CD4-positive, alpha-beta T cell (primary cell): ENCODE measurements at regions of chr3 and their contacts with region 1.

Region 1: GRCh38 chr3:171459942-171460724 is at the start of gene TNIK:
- DNase-seq: peak; percentile 85 to 98 (median 93)
- ATAC-seq: peak; percentile 82
- H3K4me3 ChIP-seq: peak within 1 kb of the TSS; percentile 74
- H3K4me3 Mint-ChIP-seq: peak within 1 kb of the TSS; percentile 97
- H3K27ac ChIP-seq: peak within 1 kb of the TSS; percentile 52 to 71
- H3K27ac Mint-ChIP-seq: peak within 1 kb of the TSS; percentile 92
- H3K4me1 ChIP-seq: peaks cover 40% of the 10 kb centered on the region
- H3K4me1 Mint-ChIP-seq: peaks cover 47% of the 10 kb centered on the region
- H3K27me3 ChIP-seq: no peaks in the 10 kb centered on the region
- H3K27me3 Mint-ChIP-seq: no peaks in the 10 kb centered on the region
- CTCF ChIP-seq: peak; percentile 29
- total RNA-seq, gene TNIK: 71.0 to 78.3 TPM

Region 2: DNA sequence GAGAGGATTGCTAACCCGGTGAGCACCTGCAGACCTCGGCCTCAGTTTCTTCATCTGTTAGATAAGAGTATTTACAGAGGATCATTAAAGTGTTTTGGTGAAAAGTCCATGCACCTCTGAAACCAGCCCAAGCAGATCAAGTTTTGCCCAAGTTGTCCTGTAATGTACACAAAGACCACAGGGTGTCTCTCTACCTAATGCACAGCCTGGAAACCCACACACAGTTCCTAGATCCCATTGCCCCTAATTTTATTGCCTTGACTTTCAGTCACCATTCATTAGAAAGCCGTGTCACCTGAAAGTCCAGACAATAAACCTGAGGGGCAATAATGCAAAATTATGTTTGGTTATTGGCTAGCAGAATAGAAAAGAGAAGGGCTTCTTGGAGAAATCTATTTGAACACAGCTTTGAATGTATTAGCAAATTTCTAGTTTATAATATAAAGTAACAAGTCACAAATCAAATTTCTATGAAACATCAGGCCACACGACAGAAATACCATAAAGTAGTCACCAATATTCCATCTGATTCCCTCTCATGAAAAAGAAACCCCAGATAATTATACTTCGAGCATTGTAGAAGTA is 272.3 kb before region 1 on chr3:
- CTCF ChIA-PET with region 1: no interaction called
- POLR2A ChIA-PET with region 1: no interaction called
- intact Hi-C with region 1: loop called (anchors 5 to 10 kb)
- DNase-seq: peak in 4 of 14 experiments; percentile 28 to 61 (median 52)
- ATAC-seq: peak; percentile 59
- H3K4me3 ChIP-seq: no peak overlapping the region
- H3K4me3 Mint-ChIP-seq: no peak overlapping the region
- H3K27ac ChIP-seq: no peak overlapping the region
- H3K27ac Mint-ChIP-seq: no peak overlapping the region
- H3K4me1 ChIP-seq: peaks cover 5% of the 10 kb centered on the region
- H3K4me1 Mint-ChIP-seq: peaks cover 33% of the 10 kb centered on the region
- H3K27me3 ChIP-seq: no peaks in the 10 kb centered on the region
- H3K27me3 Mint-ChIP-seq: no peaks in the 10 kb centered on the region
- CTCF ChIP-seq: peak; percentile 70

Region 3: GRCh38 chr3:171328419-171329082 is 131.6 kb before region 1 on chr3:
- CTCF ChIA-PET with region 1: interaction called, 3 read pairs
- POLR2A ChIA-PET with region 1: no interaction called
- intact Hi-C with region 1: loop called in 1 of 2 experiments (anchors 5 kb)
- DNase-seq: peak in 13 of 14 experiments; percentile 22 to 83 (median 40)
- ATAC-seq: peak; percentile 98
- H3K4me3 ChIP-seq: no peak overlapping the region
- H3K4me3 Mint-ChIP-seq: peak overlapping the region; percentile 3
- H3K27ac ChIP-seq: no peak overlapping the region
- H3K27ac Mint-ChIP-seq: peak overlapping the region; percentile 14
- H3K4me1 ChIP-seq: peaks cover 17% of the 10 kb centered on the region
- H3K4me1 Mint-ChIP-seq: peaks cover 71% of the 10 kb centered on the region
- H3K27me3 ChIP-seq: no peaks in the 10 kb centered on the region
- H3K27me3 Mint-ChIP-seq: no peaks in the 10 kb centered on the region
- CTCF ChIP-seq: peak; percentile 35

Region 4: GRCh38 chr3:171480526-171480925 is 20.4 kb after region 1 on chr3:
- CTCF ChIA-PET with region 1: interaction called, 12 read pairs
- POLR2A ChIA-PET with region 1: interaction called, 20 read pairs
- intact Hi-C with region 1: no loop called
- DNase-seq: peak in 4 of 14 experiments; percentile 28 to 73 (median 40)
- ATAC-seq: peak; percentile 88
- H3K4me3 ChIP-seq: no peak overlapping the region
- H3K4me3 Mint-ChIP-seq: peak overlapping the region; percentile 72
- H3K27ac ChIP-seq: peak overlapping the region in 1 of 2 donors; percentile 32
- H3K27ac Mint-ChIP-seq: peak overlapping the region; percentile 51
- H3K4me1 ChIP-seq: peaks cover 14% of the 10 kb centered on the region
- H3K4me1 Mint-ChIP-seq: peaks cover 11% of the 10 kb centered on the region
- H3K27me3 ChIP-seq: no peaks in the 10 kb centered on the region
- H3K27me3 Mint-ChIP-seq: no peaks in the 10 kb centered on the region
- CTCF ChIP-seq: no peak

Region 5: GRCh38 chr3:171514466-171514865 is 54.3 kb after region 1 on chr3:
- CTCF ChIA-PET with region 1: no interaction called
- POLR2A ChIA-PET with region 1: no interaction called
- intact Hi-C with region 1: loop called in 1 of 2 experiments (anchors 5 kb)
- DNase-seq: no peak
- ATAC-seq: no peak
- H3K4me3 ChIP-seq: no peak overlapping the region
- H3K4me3 Mint-ChIP-seq: no peak overlapping the region
- H3K27ac ChIP-seq: no peak overlapping the region
- H3K27ac Mint-ChIP-seq: no peak overlapping the region
- H3K4me1 ChIP-seq: no peaks in the 10 kb centered on the region
- H3K4me1 Mint-ChIP-seq: no peaks in the 10 kb centered on the region
- H3K27me3 ChIP-seq: no peaks in the 10 kb centered on the region
- H3K27me3 Mint-ChIP-seq: no peaks in the 10 kb centered on the region
- CTCF ChIP-seq: no peak

Region 6: GRCh38 chr3:171614318-171614921 is 154.3 kb after region 1 on chr3:
- CTCF ChIA-PET with region 1: no interaction called
- POLR2A ChIA-PET with region 1: no interaction called
- intact Hi-C with region 1: no loop called
- DNase-seq: peak in 3 of 14 experiments; percentile 4 to 35 (median 23)
- ATAC-seq: no peak
- H3K4me3 ChIP-seq: no peak overlapping the region
- H3K4me3 Mint-ChIP-seq: no peak overlapping the region
- H3K27ac ChIP-seq: no peak overlapping the region
- H3K27ac Mint-ChIP-seq: no peak overlapping the region
- H3K4me1 ChIP-seq: no peaks in the 10 kb centered on the region
- H3K4me1 Mint-ChIP-seq: no peaks in the 10 kb centered on the region
- H3K27me3 ChIP-seq: no peaks in the 10 kb centered on the region
- H3K27me3 Mint-ChIP-seq: no peaks in the 10 kb centered on the region
- CTCF ChIP-seq: no peak

Region 7: GRCh38 chr3:171636666-171637065 is 176.5 kb after region 1 on chr3:
- CTCF ChIA-PET with region 1: no interaction called
- POLR2A ChIA-PET with region 1: no interaction called
- intact Hi-C with region 1: no loop called
- DNase-seq: no peak
- ATAC-seq: no peak
- H3K4me3 ChIP-seq: no peak overlapping the region
- H3K4me3 Mint-ChIP-seq: no peak overlapping the region
- H3K27ac ChIP-seq: no peak overlapping the region
- H3K27ac Mint-ChIP-seq: no peak overlapping the region
- H3K4me1 ChIP-seq: no peaks in the 10 kb centered on the region
- H3K4me1 Mint-ChIP-seq: no peaks in the 10 kb centered on the region
- H3K27me3 ChIP-seq: no peaks in the 10 kb centered on the region
- H3K27me3 Mint-ChIP-seq: no peaks in the 10 kb centered on the region
- CTCF ChIP-seq: no peak